MCF 10A (cell line): ENCODE measurements at regions of chr1 and their contacts with region 1.

Region 1: GRCh38 chr1:15046487-15047165 is 106.9 kb upstream of the TMEM51 start:
- DNase-seq: peak; percentile 80
- H3K4me3 Mint-ChIP-seq: no peak overlapping the region
- H3K27ac Mint-ChIP-seq: no peak overlapping the region
- H3K4me1 Mint-ChIP-seq: no peaks in the 10 kb centered on the region
- H3K27me3 Mint-ChIP-seq: no peaks in the 10 kb centered on the region
- CTCF ChIP-seq: peak; percentile 95

Region 2: DNA sequence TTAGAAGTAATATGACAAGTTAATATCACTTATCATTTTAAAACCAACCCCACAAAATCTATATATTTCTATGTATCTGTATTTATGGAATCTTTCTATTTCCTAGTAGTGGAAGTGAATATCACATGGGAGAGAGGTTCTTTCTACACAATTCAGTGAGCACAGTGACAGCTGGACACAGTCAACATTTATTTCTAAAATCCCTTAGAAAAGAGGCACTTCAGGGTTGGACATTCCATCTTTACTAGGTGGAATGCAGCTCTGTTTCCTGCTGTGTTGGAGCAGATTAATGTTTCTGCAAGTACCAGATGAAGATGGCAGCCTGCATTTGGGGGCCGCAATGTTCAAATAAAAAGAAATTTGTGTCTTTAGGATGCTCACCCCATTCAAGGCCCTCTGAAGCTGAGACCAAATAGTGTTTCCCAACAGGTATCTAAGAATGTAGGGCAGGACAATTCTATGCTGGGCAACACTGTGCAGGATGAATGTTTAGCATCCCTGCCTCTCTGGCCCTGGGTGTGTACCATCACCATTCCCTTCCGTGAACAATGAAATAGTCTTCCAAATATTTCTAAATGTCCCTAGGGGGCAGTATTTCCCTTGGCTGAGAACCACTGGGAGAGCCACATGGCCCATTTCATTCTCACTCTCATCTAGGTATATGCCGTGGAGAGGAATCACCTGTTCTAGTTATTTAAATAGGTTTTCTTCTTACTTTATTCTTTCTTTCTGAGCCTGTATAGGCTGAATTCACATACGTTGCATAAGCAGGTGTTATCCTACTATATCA is 951.8 kb before region 1 on chr1:
- CTCF ChIA-PET with region 1: no interaction called
- POLR2A ChIA-PET with region 1: no interaction called
- intact Hi-C with region 1: loop called (anchors 5 kb)
- DNase-seq: peak; percentile 43
- H3K4me3 Mint-ChIP-seq: no peak overlapping the region
- H3K27ac Mint-ChIP-seq: no peak overlapping the region
- H3K4me1 Mint-ChIP-seq: peaks cover 4% of the 10 kb centered on the region
- H3K27me3 Mint-ChIP-seq: no peaks in the 10 kb centered on the region
- CTCF ChIP-seq: peak; percentile 43

Region 3: GRCh38 chr1:14567056-14567455 is 479.6 kb before region 1 on chr1:
- CTCF ChIA-PET with region 1: interaction called, 3 read pairs
- POLR2A ChIA-PET with region 1: no interaction called
- intact Hi-C with region 1: loop called (anchors 1 kb)
- DNase-seq: peak; percentile 26
- H3K4me3 Mint-ChIP-seq: no peak overlapping the region
- H3K27ac Mint-ChIP-seq: no peak overlapping the region
- H3K4me1 Mint-ChIP-seq: no peaks in the 10 kb centered on the region
- H3K27me3 Mint-ChIP-seq: no peaks in the 10 kb centered on the region
- CTCF ChIP-seq: no peak

Region 4: GRCh38 chr1:14848625-14849024 is 198.0 kb before region 1 on chr1:
- CTCF ChIA-PET with region 1: no interaction called
- POLR2A ChIA-PET with region 1: no interaction called
- intact Hi-C with region 1: no loop called
- DNase-seq: no peak
- H3K4me3 Mint-ChIP-seq: no peak overlapping the region
- H3K27ac Mint-ChIP-seq: no peak overlapping the region
- H3K4me1 Mint-ChIP-seq: no peaks in the 10 kb centered on the region
- H3K27me3 Mint-ChIP-seq: peaks cover 6% of the 10 kb centered on the region
- CTCF ChIP-seq: no peak

Region 5: DNA sequence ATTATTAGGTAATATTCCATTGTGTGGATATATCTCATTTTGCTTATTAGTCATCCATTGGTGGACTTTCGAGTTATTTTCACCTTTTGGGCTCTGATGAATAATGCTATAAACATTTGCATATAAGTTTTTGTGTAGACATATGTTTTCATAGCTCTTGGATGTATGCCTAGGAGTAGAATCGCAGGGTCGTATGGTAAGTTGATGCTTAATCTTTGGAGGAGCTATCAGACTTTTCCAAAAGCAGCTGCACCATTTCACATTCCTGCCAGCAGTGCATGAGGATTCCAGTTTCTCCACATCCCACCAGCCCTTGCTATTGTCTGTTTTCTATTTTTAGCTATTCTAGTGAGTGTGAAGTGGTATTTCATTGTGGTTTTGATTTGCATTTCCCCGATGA is 13.4 kb before region 1 on chr1:
- CTCF ChIA-PET with region 1: interaction called, 15 read pairs
- POLR2A ChIA-PET with region 1: no interaction called
- intact Hi-C with region 1: no loop called
- DNase-seq: peak; percentile 15
- H3K4me3 Mint-ChIP-seq: no peak overlapping the region
- H3K27ac Mint-ChIP-seq: no peak overlapping the region
- H3K4me1 Mint-ChIP-seq: peaks cover 6% of the 10 kb centered on the region
- H3K27me3 Mint-ChIP-seq: no peaks in the 10 kb centered on the region
- CTCF ChIP-seq: no peak